Caco-2 (cell line): ENCODE measurements at regions of chr10 and their contacts with region 1.

Region 1: DNA sequence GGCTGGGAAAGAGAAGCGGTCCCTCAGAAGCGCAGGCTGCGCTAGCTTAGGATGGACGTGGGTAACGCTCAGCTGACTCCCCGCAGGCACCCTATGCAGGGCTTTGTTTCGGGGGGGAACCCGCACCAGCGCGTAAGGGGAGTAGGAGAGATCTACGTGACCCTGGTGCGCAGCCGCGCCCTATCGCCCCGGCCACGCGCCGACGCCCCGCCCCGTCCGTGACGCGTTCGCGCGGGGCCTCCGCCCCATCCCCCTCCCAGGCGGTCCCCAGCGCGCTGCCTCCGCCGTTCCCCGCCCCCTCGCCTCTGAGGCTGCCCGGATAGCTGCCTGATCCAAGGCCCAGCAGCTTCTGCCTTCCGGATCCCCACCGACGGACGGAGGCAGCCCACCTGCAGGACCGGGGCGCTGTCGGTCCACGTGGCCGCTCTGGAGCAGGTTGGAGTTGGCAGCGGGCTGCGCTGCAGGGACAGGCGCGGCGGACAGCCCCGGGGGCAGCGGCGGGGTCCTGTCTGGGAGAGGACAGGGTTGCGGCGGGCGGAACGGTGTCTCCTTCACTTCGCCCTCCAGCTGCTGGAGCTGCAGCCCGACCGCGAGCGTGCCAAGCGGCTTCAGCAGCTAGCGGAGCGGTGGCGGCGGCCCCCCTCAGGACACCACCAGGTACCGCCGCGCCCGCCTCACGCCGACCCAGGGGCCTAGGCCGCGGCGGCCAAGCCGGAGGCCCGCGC is at the start of gene VDAC2:
- DNase-seq: peak; percentile 93 to 96
- H3K4me3 ChIP-seq: peak within 1 kb of the TSS; percentile 75
- H3K4me3 Mint-ChIP-seq: peak within 1 kb of the TSS; percentile 100
- H3K27ac Mint-ChIP-seq: peak within 1 kb of the TSS; percentile 100
- H3K4me1 ChIP-seq: peaks cover 28% of the 10 kb centered on the region
- H3K4me1 Mint-ChIP-seq: peaks cover 5% of the 10 kb centered on the region
- H3K27me3 ChIP-seq: no peaks in the 10 kb centered on the region
- H3K27me3 Mint-ChIP-seq: no peaks in the 10 kb centered on the region
- CTCF ChIP-seq: peak in 1 of 2 experiments; percentile 8
- total RNA-seq, gene VDAC2: 244 and 250 TPM in 2 replicates

Region 2: GRCh38 chr10:75226656-75227055 is 16.2 kb after region 1 on chr10:
- CTCF ChIA-PET with region 1: interaction called, 21 read pairs
- POLR2A ChIA-PET with region 1: interaction called, 52 read pairs
- intact Hi-C with region 1: loop called (anchors 1 kb)
- DNase-seq: peak in 1 of 2 experiments; percentile 14
- H3K4me3 ChIP-seq: no peak overlapping the region
- H3K4me3 Mint-ChIP-seq: peak overlapping the region; percentile 53
- H3K27ac Mint-ChIP-seq: peak overlapping the region; percentile 88
- H3K4me1 ChIP-seq: peaks cover 66% of the 10 kb centered on the region
- H3K4me1 Mint-ChIP-seq: peaks cover 65% of the 10 kb centered on the region
- H3K27me3 ChIP-seq: no peaks in the 10 kb centered on the region
- H3K27me3 Mint-ChIP-seq: no peaks in the 10 kb centered on the region
- CTCF ChIP-seq: no peak

Region 3: GRCh38 chr10:75367021-75367487 is 156.6 kb after region 1 on chr10:
- CTCF ChIA-PET with region 1: no interaction called
- POLR2A ChIA-PET with region 1: no interaction called
- intact Hi-C with region 1: no loop called
- DNase-seq: no peak
- H3K4me3 ChIP-seq: no peak overlapping the region
- H3K4me3 Mint-ChIP-seq: no peak overlapping the region
- H3K27ac Mint-ChIP-seq: no peak overlapping the region
- H3K4me1 ChIP-seq: no peaks in the 10 kb centered on the region
- H3K4me1 Mint-ChIP-seq: no peaks in the 10 kb centered on the region
- H3K27me3 ChIP-seq: no peaks in the 10 kb centered on the region
- H3K27me3 Mint-ChIP-seq: no peaks in the 10 kb centered on the region
- CTCF ChIP-seq: no peak